ENCODE measurements at regions of chr17 and their contacts with region 1.

Region 1: GRCh38 chr17:82351716-82352488 is 7.1 kb upstream of the TEX19 start:
- DNase-seq: peak; percentile 98
- H3K4me3 ChIP-seq: peak overlapping the region; percentile 55
- H3K27ac ChIP-seq: peak overlapping the region; percentile 97
- H3K4me1 ChIP-seq: peaks cover 67% of the 10 kb centered on the region
- CTCF ChIP-seq: peak; percentile 100

Region 2: GRCh38 chr17:82153745-82154375 is 198.0 kb before region 1 on chr17:
- CTCF ChIA-PET with region 1: no interaction called
- POLR2A ChIA-PET with region 1: no interaction called
- intact Hi-C with region 1: no loop called
- DNase-seq: peak; percentile 85
- H3K4me3 ChIP-seq: no peak overlapping the region
- H3K27ac ChIP-seq: no peak overlapping the region
- H3K4me1 ChIP-seq: no peaks in the 10 kb centered on the region
- CTCF ChIP-seq: peak; percentile 99

Region 3: DNA sequence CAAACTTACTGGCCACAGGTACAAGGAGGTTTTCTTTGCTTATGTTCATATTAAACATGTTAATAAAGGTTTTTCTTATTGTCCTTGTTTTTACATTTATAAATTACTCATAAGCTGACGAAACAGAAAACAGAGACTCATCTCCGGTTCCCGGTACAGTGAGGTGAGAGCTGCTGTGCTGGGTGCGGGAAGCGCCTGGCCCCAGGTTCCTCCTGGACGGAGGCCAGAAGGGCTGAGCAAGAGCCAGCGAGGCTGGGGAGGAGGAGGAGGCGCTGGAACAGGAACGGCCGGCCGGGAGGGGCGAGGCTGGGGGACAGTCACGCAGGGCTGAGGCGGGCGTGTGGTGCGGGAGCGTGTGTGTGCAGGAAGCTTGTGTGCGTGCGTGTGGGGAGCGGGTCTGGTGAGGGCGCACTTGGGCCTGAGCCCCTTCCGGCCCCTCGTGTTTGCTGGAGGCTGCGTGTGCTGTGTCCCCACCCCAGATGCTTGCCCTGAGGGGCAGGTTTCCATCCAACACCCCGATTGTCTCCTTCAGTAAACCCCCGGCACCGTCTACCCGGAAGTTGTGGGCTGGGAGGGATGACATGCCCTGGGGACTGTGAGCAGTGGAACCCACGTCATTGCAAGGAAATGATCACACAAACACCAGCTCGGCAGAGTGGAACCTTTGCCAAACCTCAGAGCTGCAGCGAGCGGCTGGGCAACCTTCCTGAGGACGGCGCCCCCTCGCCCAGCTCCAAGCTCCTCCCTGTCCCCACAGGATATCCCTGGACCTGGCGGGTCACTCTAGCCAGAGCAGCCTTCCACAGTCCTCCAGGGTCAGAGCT is 54.0 kb before region 1 on chr17:
- CTCF ChIA-PET with region 1: interaction called, 5 read pairs
- POLR2A ChIA-PET with region 1: interaction called, 22 read pairs
- intact Hi-C with region 1: loop called (anchors 1 kb)
- DNase-seq: peak; percentile 90
- H3K4me3 ChIP-seq: peak overlapping the region; percentile 66
- H3K27ac ChIP-seq: peak overlapping the region; percentile 57
- H3K4me1 ChIP-seq: peaks cover 47% of the 10 kb centered on the region
- CTCF ChIP-seq: no peak; the same call in 1 of the 2 replicates

Region 4: DNA sequence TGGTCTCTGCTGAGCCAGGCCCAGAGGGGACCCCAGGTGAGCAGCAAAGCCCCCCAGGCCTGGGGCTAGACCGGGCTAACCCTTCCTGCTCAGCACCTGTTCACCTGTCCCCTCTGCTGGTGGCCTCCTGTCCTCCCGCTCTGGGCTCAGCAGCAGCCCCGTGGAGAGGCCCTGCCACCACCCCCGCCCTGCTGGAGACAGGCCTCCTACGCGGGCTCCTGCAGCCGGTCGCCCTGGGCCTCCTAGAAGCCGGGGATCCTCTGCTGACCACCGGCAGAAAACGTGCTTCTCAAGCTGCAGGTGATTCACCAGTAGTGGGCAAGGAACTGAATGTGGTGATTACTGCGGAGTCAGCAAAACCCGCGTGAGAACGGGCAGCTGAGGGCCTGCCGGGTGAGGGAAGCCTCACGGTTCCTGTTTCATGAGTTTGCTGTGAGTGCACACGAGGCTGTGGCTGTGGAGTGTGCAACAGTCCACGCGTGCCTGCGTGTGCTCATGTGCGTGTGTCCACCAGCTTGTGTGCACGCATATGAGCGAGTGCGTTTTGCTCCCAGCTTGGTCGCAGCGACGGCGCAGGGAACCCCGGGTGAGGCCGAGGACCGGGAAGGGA is 19.1 kb before region 1 on chr17:
- CTCF ChIA-PET with region 1: no interaction called
- POLR2A ChIA-PET with region 1: no interaction called
- intact Hi-C with region 1: no loop called
- DNase-seq: no peak
- H3K4me3 ChIP-seq: no peak overlapping the region
- H3K27ac ChIP-seq: no peak overlapping the region
- H3K4me1 ChIP-seq: peaks cover 26% of the 10 kb centered on the region
- CTCF ChIP-seq: no peak

Region 5: GRCh38 chr17:82402865-82403264 is 51.0 kb after region 1 on chr17:
- CTCF ChIA-PET with region 1: no interaction called
- POLR2A ChIA-PET with region 1: interaction called, 6 read pairs
- intact Hi-C with region 1: loop called (anchors 1 kb)
- DNase-seq: peak; percentile 78
- H3K4me3 ChIP-seq: no peak overlapping the region
- H3K27ac ChIP-seq: peak overlapping the region; percentile 83
- H3K4me1 ChIP-seq: peaks cover 31% of the 10 kb centered on the region
- CTCF ChIP-seq: no peak

Region 6: GRCh38 chr17:82450170-82451106 is 98.5 kb after region 1 on chr17 and contains the start of gene CYBC1:
- CTCF ChIA-PET with region 1: interaction called, 6 read pairs
- POLR2A ChIA-PET with region 1: interaction called, 4 read pairs
- intact Hi-C with region 1: loop called (anchors 1 kb)
- DNase-seq: peak; percentile 99
- H3K4me3 ChIP-seq: peak within 1 kb of the TSS; percentile 80
- H3K27ac ChIP-seq: peak within 1 kb of the TSS; percentile 98
- H3K4me1 ChIP-seq: peaks cover 40% of the 10 kb centered on the region
- CTCF ChIP-seq: no peak
- total RNA-seq, gene CYBC1: 424 and 470 TPM in 2 replicates

Region 7: GRCh38 chr17:82551779-82552457 is 200.0 kb after region 1 on chr17:
- CTCF ChIA-PET with region 1: interaction called, 3 read pairs
- POLR2A ChIA-PET with region 1: interaction called, 3 read pairs
- intact Hi-C with region 1: loop called (anchors 1 kb)
- DNase-seq: peak; percentile 91
- H3K4me3 ChIP-seq: peak overlapping the region; percentile 1
- H3K27ac ChIP-seq: peak overlapping the region; percentile 17
- H3K4me1 ChIP-seq: peaks cover 37% of the 10 kb centered on the region
- CTCF ChIP-seq: peak; percentile 99

Region 8: DNA sequence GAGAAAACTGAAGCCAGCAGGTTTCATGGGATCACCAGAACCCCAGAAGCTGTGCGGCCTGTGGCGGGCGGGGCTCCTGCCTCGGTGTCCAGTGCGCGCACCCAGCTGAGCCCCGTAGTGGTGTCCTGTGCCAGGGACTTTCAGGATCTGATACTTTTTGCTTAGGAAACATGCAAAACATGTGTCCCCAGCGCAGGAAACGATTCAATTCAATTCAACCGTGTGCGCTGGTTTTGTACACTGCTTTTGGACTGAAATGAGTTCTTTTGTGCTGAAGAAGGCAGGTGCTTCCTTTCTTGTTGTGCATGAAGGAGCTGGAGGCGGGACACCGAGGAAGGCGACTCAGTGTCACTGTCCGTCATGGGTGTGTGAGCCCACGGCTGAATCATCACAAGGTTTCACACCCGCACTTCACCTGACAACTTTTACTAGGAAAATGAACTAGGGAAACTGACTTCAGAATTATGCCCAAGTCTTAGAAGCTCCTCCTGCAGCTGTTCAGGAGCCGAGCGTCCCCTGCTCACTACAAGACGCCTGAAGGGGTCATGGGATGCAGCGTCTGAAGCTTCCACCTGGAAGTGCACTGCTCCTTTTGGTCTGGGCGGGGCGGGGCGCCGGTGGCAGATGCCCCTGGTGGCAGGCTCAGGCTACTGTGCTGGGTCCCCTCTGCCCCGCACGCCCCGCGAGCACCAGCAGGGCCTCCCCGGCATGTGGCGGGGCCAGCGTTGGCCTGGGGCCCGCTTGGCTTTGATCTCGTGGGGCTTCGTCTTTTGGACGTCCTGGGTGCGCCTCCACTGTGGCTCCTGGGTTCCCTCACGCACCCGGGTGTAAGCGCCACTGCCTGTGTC is 519.4 kb after region 1 on chr17:
- CTCF ChIA-PET with region 1: no interaction called
- POLR2A ChIA-PET with region 1: no interaction called
- intact Hi-C with region 1: loop called (anchors 5 kb)
- DNase-seq: peak; percentile 99
- H3K4me3 ChIP-seq: peak overlapping the region; percentile 51
- H3K27ac ChIP-seq: peak overlapping the region; percentile 95
- H3K4me1 ChIP-seq: peaks cover 76% of the 10 kb centered on the region
- CTCF ChIP-seq: peak; percentile 83

Measured in OCI-LY7 (cell line).